Endothelial cell of umbilical vein (primary cell): ENCODE measurements at regions of chr3 and their contacts with region 1.

Region 1: DNA sequence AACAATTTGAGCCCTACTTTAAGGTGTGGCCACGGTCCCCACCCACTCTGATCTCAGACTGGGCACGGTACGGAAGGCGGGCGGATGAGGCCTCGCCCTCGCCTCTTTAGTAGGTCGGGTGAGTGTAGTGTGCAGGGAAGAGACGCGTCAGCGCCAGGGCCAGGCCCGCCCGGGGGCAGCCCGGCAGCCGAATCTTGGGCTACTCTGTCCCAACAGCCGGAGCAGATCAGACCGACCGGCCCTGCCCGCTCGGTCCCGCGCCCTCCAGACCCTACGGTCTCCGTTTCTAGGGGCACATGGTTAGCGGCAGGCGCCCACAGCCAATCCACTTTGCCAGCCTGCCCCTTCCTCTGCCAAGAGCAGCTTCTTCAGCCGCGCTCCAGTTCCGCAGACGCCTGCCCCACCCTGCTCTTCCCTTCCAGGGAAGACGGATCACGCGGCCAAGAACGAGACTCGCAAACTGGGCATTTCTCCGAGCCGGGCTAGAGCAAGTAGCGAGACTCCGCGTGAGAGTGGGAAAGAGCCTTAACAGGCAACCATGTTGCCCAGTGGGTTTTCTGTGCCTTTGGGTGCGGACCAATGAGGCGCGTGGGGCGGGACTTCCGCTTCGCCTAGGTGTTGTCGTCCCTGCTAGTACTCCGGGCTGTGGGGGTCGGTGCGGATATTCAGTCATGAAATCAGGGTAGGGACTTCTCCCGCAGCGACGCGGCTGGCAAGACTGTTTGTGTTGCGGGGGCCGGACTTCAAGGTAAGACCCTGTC is at the start of gene RNF13:
- DNase-seq: peak; percentile 97
- H3K4me3 ChIP-seq: peak within 1 kb of the TSS; percentile 59 to 84 (median 83)
- H3K27ac ChIP-seq: peak within 1 kb of the TSS; percentile 65
- H3K4me1 ChIP-seq: peaks cover 24% of the 10 kb centered on the region
- H3K27me3 ChIP-seq: no peaks in the 10 kb centered on the region
- CTCF ChIP-seq: no peak
- POLR2A ChIP-seq: peak; percentile 78
- total RNA-seq, gene RNF13: 27.1 and 29.5 TPM in 2 replicates

Region 2: GRCh38 chr3:149393345-149394160 is 419.2 kb before region 1 on chr3:
- CTCF ChIA-PET with region 1: interaction called, 3 read pairs
- POLR2A ChIA-PET with region 1: no interaction called
- dilution Hi-C with region 1: no loop called
- intact Hi-C with region 1: loop called (anchors 2 kb)
- DNase-seq: peak; percentile 88
- H3K4me3 ChIP-seq: peak overlapping the region in 1 of 3 experiments; percentile 21
- H3K27ac ChIP-seq: peak overlapping the region; percentile 90
- H3K4me1 ChIP-seq: peaks cover 31% of the 10 kb centered on the region
- H3K27me3 ChIP-seq: no peaks in the 10 kb centered on the region
- CTCF ChIP-seq: peak; percentile 84
- POLR2A ChIP-seq: no peak

Region 3: DNA sequence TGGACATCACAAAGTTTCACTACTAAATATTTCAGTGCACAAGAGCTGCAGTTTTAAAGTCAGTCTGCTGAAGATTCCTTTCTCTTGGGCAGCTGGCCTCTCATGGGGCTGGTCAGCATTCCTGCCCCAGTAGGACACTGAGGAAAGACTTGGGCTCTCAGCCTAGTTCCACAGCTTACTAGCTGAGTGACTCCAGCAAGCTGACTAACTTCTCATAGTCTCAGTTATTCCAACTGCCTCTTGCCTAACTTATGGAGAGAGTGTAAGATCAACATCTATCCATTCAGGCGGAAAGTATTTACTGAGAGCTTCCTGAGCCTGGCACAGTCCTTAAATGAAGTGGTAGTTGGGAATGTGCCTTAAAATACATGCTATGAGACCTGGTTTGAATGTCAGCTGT is 311.3 kb before region 1 on chr3:
- CTCF ChIA-PET with region 1: interaction called, 122 read pairs
- POLR2A ChIA-PET with region 1: no interaction called
- dilution Hi-C with region 1: no loop called
- intact Hi-C with region 1: loop called (anchors 1 kb)
- DNase-seq: peak; percentile 61
- H3K4me3 ChIP-seq: no peak overlapping the region
- H3K27ac ChIP-seq: no peak overlapping the region
- H3K4me1 ChIP-seq: peaks cover 15% of the 10 kb centered on the region
- H3K27me3 ChIP-seq: no peaks in the 10 kb centered on the region
- CTCF ChIP-seq: no peak
- POLR2A ChIP-seq: no peak

Region 4: DNA sequence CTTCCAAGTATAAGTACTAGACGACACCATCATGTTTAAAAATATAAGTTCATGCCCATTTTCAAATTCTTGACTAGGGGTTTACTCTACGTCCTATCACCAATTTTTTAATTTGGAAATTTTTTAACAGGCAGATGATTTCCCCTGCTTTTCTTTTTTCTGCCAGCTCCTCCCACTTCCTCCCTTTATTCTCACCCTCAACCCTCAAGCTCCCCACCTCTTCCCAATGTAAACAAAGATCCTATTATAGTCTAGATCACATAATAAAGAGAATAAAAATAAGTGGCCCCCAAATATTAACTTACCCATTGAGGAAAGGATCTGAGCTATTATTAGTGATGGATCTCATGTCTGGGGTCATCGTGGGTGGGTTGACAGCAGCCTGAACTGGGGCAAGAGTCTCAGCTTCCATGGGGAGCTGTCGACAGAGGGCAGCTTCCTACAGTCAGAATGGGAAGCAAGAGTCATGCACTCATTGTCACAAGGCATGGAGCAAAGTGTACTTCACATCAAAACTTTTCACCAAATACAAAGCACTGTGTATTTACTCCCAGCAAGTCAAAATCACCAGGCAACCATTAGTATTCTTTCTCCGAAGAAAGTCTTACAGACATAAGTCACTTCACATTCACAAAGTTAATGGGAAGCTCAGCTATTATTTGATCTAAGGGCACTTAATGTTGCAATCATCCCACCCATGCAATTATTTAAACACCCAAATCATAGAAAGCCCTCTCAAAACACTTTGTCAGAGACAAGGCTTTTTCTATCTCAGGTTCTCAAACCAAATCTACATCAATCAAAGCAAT is 285.1 kb before region 1 on chr3:
- CTCF ChIA-PET with region 1: interaction called, 11 read pairs
- POLR2A ChIA-PET with region 1: no interaction called
- dilution Hi-C with region 1: no loop called
- intact Hi-C with region 1: no loop called
- DNase-seq: peak; percentile 85
- H3K4me3 ChIP-seq: no peak overlapping the region
- H3K27ac ChIP-seq: peak overlapping the region; percentile 62
- H3K4me1 ChIP-seq: peaks cover 43% of the 10 kb centered on the region
- H3K27me3 ChIP-seq: no peaks in the 10 kb centered on the region
- CTCF ChIP-seq: peak in 1 of 2 donors; percentile 50
- POLR2A ChIP-seq: no peak

Region 5: GRCh38 chr3:149717391-149718056 is 95.3 kb before region 1 on chr3:
- CTCF ChIA-PET with region 1: interaction called, 11 read pairs
- POLR2A ChIA-PET with region 1: no interaction called
- dilution Hi-C with region 1: no loop called
- intact Hi-C with region 1: no loop called
- DNase-seq: peak; percentile 87
- H3K4me3 ChIP-seq: no peak overlapping the region
- H3K27ac ChIP-seq: no peak overlapping the region
- H3K4me1 ChIP-seq: peaks cover 15% of the 10 kb centered on the region
- H3K27me3 ChIP-seq: no peaks in the 10 kb centered on the region
- CTCF ChIP-seq: peak; percentile 54 to 58
- POLR2A ChIP-seq: no peak

Region 6: GRCh38 chr3:149771652-149772271 is 41.0 kb before region 1 on chr3:
- CTCF ChIA-PET with region 1: interaction called, 263 read pairs
- POLR2A ChIA-PET with region 1: no interaction called
- dilution Hi-C with region 1: no loop called
- intact Hi-C with region 1: loop called (anchors 1 kb)
- DNase-seq: peak; percentile 58
- H3K4me3 ChIP-seq: no peak overlapping the region
- H3K27ac ChIP-seq: no peak overlapping the region
- H3K4me1 ChIP-seq: no peaks in the 10 kb centered on the region
- H3K27me3 ChIP-seq: peaks cover 3% of the 10 kb centered on the region in 2 experiments
- CTCF ChIP-seq: peak; percentile 70 to 83
- POLR2A ChIP-seq: no peak

Region 7: DNA sequence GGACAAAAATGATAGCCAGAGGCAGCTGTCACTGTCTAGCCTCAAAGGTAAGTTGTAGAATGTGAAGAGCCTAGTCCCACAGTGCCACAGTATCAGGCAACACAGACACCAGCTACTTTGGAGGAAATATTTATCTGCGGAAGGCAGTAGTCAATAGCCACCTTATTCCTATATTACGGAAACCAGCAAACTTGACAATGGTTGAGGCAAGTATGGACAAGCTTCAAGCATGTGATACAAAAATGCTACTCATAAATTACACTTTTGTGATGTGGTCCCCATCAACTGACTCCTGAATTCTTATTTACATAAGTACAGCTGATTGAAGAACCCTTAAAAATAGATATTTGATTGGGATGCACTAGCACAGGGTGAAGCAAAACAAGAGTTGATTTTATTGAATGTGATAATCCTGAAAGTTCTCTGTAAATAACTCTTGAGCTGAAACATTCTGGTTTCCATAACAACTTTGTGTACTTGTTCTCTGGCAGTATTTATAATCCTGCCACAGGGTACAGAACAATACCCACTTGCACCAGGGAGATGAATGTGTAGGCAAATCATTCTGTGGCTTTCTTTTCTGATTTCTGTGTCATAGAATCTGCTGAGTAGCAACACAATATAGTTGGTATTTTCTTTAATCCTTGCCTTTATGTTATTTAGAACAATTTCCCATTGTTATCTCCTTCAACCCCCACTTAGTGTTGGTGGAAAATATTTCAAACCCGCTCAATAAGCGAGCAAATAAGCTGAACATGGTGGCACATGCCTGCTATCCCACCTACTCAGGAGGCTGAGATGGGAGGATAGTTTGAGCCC is 20.1 kb before region 1 on chr3 and contains the start of gene ANKUB1:
- CTCF ChIA-PET with region 1: interaction called, 16 read pairs
- POLR2A ChIA-PET with region 1: no interaction called
- dilution Hi-C with region 1: no loop called
- intact Hi-C with region 1: no loop called
- DNase-seq: no peak
- H3K4me3 ChIP-seq: no peak within 1 kb of the TSS
- H3K27ac ChIP-seq: no peak within 1 kb of the TSS
- H3K4me1 ChIP-seq: no peaks in the 10 kb centered on the region
- H3K27me3 ChIP-seq: peaks cover 11 to 15% of the 10 kb centered on the region in 2 experiments
- CTCF ChIP-seq: no peak
- POLR2A ChIP-seq: no peak
- total RNA-seq, gene ANKUB1: not detected in 2 replicates

Region 8: DNA sequence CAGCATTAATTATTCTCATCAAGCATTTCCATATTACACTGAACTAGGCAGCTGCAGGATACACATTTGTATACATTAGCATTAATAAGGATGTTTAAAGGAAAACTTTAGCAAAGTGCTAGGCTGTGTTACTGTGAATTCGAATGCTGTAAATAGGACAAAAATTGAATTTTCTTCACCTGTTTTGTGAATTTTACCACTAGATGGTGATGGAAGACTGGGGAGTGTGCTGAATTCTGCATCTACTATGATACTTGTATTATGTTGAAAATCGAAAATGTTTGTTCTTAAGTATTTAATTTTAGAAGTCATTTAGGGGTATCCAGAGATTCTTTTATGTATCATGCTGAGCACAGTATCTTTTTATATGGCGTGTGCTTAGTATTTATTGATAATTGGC is 1477.9 kb after region 1 on chr3:
- CTCF ChIA-PET with region 1: no interaction called
- POLR2A ChIA-PET with region 1: no interaction called
- dilution Hi-C with region 1: no loop called
- intact Hi-C with region 1: no loop called
- DNase-seq: no peak
- H3K4me3 ChIP-seq: no peak overlapping the region
- H3K27ac ChIP-seq: no peak overlapping the region
- H3K4me1 ChIP-seq: no peaks in the 10 kb centered on the region
- H3K27me3 ChIP-seq: peaks cover 0 to 13% of the 10 kb centered on the region in 2 experiments
- CTCF ChIP-seq: no peak
- POLR2A ChIP-seq: no peak